Upper lobe of right lung (tissue), 1 donor: ENCODE measurements at regions of chr7 and their contacts with region 1.

Region 1: GRCh38 chr7:120805636-120806388 is 52.1 kb downstream of the TSPAN12 start:
- DNase-seq: no peak
- ATAC-seq: peak; percentile 88
- H3K4me3 ChIP-seq: no peak overlapping the region
- H3K27ac ChIP-seq: no peak overlapping the region
- H3K4me1 ChIP-seq: no peaks in the 10 kb centered on the region
- H3K27me3 ChIP-seq: no peaks in the 10 kb centered on the region
- CTCF ChIP-seq: peak; percentile 83

Region 2: DNA sequence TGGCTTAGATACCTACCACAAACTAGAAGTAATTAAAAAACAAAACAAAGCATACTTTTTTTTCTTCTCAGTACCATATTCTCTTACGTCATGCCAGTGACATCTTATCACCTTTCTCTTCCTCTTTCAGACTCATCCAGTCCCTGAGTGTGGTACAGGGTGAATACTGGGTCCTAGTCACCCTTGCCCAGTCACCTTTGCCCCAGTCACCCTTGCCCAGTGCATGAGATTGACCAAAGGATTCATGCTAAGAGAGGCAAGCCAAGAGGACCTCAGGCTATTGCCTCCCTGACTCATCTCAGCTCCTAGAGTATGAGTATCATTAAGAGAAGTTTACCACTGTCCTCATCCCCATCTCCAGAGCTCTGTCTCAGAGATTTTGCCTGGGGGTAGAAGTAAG is 62.1 kb after region 1 on chr7:
- intact Hi-C with region 1: no loop called
- DNase-seq: no peak
- ATAC-seq: no peak
- H3K4me3 ChIP-seq: no peak overlapping the region
- H3K27ac ChIP-seq: no peak overlapping the region
- H3K4me1 ChIP-seq: no peaks in the 10 kb centered on the region
- H3K27me3 ChIP-seq: no peaks in the 10 kb centered on the region
- CTCF ChIP-seq: no peak

Region 3: GRCh38 chr7:120941064-120941463 is 135.3 kb after region 1 on chr7:
- intact Hi-C with region 1: loop called (anchors 5 kb)
- DNase-seq: no peak
- ATAC-seq: peak; percentile 67
- H3K4me3 ChIP-seq: no peak overlapping the region
- H3K27ac ChIP-seq: no peak overlapping the region
- H3K4me1 ChIP-seq: no peaks in the 10 kb centered on the region
- H3K27me3 ChIP-seq: no peaks in the 10 kb centered on the region
- CTCF ChIP-seq: peak; percentile 47